ENCODE measurements at regions of chr13 and their contacts with region 1.

Region 1: DNA sequence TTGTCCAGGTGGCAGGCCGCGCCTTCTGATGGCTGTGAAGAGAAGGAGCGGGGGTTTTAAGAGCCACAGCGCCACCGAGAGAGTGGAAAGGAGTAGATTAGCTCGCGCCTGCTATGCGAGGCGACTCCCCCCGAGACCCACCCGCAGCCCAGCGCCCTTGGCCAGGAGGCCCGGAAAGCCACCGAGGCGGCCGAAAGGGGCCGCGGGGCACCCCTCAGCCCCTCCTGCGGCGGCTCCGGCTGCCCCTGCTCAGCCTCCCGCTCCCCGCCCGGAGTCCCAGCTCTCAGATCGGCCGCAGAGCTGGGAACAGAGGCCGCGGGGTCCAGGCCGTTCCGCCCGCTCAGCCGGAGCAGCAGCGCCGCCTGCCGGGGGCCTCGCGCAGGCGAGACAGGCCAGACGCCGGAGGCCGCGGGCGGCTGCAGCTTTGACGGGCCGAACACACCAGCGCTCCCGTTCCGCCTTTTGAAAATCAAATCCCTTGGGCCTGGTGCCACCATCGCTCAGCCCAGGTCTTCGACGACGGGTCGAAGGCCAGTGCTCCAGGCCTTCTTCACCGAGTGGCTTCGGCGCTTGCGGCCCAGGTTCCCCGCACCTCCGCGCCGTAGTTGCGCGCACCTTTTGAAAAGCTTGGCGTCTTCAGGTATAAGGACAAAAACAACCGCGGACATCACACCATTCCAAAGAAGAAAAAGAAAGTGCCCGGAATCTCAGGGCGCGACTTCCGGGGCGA is 15.3 kb downstream of the CDX2 start:
- DNase-seq: peak; percentile 91
- H3K4me3 Mint-ChIP-seq: peak overlapping the region; percentile 81
- H3K27ac Mint-ChIP-seq: peak overlapping the region; percentile 93
- H3K4me1 Mint-ChIP-seq: peaks cover 7% of the 10 kb centered on the region
- H3K27me3 Mint-ChIP-seq: no peaks in the 10 kb centered on the region
- CTCF ChIP-seq: peak; percentile 68

Region 2: GRCh38 chr13:27744801-27745200 is 209.0 kb before region 1 on chr13:
- CTCF ChIA-PET with region 1: no interaction called
- intact Hi-C with region 1: no loop called
- DNase-seq: no peak
- H3K4me3 Mint-ChIP-seq: no peak overlapping the region
- H3K27ac Mint-ChIP-seq: no peak overlapping the region
- H3K4me1 Mint-ChIP-seq: no peaks in the 10 kb centered on the region
- H3K27me3 Mint-ChIP-seq: peaks cover 34% of the 10 kb centered on the region
- CTCF ChIP-seq: no peak

Region 3: GRCh38 chr13:27868641-27869435 is 85.0 kb before region 1 on chr13:
- CTCF ChIA-PET with region 1: interaction called, 36 read pairs
- intact Hi-C with region 1: loop called (anchors 1 kb)
- DNase-seq: peak; percentile 5
- H3K4me3 Mint-ChIP-seq: no peak overlapping the region
- H3K27ac Mint-ChIP-seq: no peak overlapping the region
- H3K4me1 Mint-ChIP-seq: no peaks in the 10 kb centered on the region
- H3K27me3 Mint-ChIP-seq: no peaks in the 10 kb centered on the region
- CTCF ChIP-seq: peak; percentile 35

Region 4: DNA sequence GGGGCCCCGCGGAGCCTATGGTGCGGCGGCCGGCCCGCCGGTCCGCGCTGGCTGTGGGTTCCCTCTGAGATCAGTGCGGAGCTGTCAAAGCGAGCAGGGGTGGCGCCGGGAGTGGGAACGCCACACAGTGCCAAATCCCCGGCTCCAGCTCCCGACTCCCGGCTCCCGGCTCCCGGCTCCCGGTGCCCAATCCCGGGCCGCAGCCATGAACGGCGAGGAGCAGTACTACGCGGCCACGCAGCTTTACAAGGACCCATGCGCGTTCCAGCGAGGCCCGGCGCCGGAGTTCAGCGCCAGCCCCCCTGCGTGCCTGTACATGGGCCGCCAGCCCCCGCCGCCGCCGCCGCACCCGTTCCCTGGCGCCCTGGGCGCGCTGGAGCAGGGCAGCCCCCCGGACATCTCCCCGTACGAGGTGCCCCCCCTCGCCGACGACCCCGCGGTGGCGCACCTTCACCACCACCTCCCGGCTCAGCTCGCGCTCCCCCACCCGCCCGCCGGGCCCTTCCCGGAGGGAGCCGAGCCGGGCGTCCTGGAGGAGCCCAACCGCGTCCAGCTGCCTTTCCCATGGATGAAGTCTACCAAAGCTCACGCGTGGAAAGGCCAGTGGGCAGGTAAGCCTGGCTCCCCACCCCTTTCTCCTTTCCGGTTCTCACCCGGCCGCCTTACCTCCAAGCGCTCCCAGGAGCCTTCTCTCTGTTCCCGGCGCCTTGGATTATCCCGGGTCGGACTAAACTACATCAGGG is 33.7 kb before region 1 on chr13 and contains the start of gene PDX1:
- CTCF ChIA-PET with region 1: interaction called, 5 read pairs
- intact Hi-C with region 1: loop called (anchors 2 kb)
- DNase-seq: peak; percentile 81
- H3K4me3 Mint-ChIP-seq: peak within 1 kb of the TSS; percentile 97
- H3K27ac Mint-ChIP-seq: peak within 1 kb of the TSS; percentile 66
- H3K4me1 Mint-ChIP-seq: peaks cover 12% of the 10 kb centered on the region
- H3K27me3 Mint-ChIP-seq: no peaks in the 10 kb centered on the region
- CTCF ChIP-seq: no peak
- total RNA-seq, gene PDX1: 1.2 and 1.8 TPM in 2 replicates

Region 5: DNA sequence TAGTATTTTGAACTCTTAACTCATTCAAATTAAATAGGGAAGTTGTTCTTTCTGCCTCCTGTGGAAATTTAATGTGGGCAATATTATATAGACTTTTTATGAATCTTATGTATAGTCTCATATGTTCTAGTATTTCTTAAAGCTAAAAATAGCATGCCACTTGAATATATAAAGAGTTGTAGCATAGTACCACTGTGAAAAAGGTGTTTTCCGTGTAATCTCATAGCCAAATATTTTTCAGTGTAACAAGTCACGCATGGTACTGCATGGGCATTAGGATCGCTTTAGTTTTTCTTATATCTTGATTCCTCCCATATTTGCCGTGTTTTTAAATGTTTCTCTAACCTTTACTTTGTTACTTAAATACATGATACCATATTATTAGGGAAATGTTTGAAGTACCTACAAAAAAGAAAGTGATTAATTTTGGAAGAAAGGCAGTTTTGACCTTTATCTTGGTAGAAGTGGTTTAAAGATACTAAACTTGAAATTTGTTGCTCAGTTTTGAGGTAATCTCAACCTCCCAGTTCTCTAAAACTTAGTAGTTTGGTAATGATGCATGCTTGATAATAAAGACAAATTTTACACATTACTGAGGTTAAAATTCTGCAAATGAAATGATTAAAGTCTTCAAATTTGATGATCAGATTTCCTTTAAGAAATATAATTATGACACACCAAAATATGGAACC is 265.7 kb after region 1 on chr13:
- CTCF ChIA-PET with region 1: no interaction called
- intact Hi-C with region 1: no loop called
- DNase-seq: no peak
- H3K4me3 Mint-ChIP-seq: no peak overlapping the region
- H3K27ac Mint-ChIP-seq: no peak overlapping the region
- H3K4me1 Mint-ChIP-seq: no peaks in the 10 kb centered on the region
- H3K27me3 Mint-ChIP-seq: no peaks in the 10 kb centered on the region
- CTCF ChIP-seq: no peak